WTC11 (cell line): ENCODE measurements at regions of chr16 and their contacts with region 1.

Region 1: GRCh38 chr16:88437373-88437964 is 15.6 kb upstream of the ZFPM1 start:
- DNase-seq: peak; percentile 93
- ATAC-seq: peak; percentile 84
- H3K4me3 Mint-ChIP-seq: no peak overlapping the region
- H3K27ac Mint-ChIP-seq: no peak overlapping the region
- H3K4me1 Mint-ChIP-seq: no peaks in the 10 kb centered on the region
- H3K27me3 Mint-ChIP-seq: no peaks in the 10 kb centered on the region
- CTCF ChIP-seq: peak; percentile 93

Region 2: GRCh38 chr16:88343271-88343791 is 94.1 kb before region 1 on chr16:
- CTCF ChIA-PET with region 1: no interaction called
- POLR2A ChIA-PET with region 1: no interaction called
- DNase-seq: no peak
- ATAC-seq: no peak
- H3K4me3 Mint-ChIP-seq: no peak overlapping the region
- H3K27ac Mint-ChIP-seq: no peak overlapping the region
- H3K4me1 Mint-ChIP-seq: no peaks in the 10 kb centered on the region
- H3K27me3 Mint-ChIP-seq: no peaks in the 10 kb centered on the region
- CTCF ChIP-seq: no peak

Region 3: GRCh38 chr16:88383401-88384221 is 53.9 kb before region 1 on chr16:
- CTCF ChIA-PET with region 1: interaction called, 21 read pairs
- POLR2A ChIA-PET with region 1: no interaction called
- DNase-seq: peak; percentile 51
- ATAC-seq: peak; percentile 11
- H3K4me3 Mint-ChIP-seq: peak overlapping the region; percentile 60
- H3K27ac Mint-ChIP-seq: no peak overlapping the region
- H3K4me1 Mint-ChIP-seq: peaks cover 12% of the 10 kb centered on the region
- H3K27me3 Mint-ChIP-seq: peaks cover 38% of the 10 kb centered on the region
- CTCF ChIP-seq: no peak

Region 4: DNA sequence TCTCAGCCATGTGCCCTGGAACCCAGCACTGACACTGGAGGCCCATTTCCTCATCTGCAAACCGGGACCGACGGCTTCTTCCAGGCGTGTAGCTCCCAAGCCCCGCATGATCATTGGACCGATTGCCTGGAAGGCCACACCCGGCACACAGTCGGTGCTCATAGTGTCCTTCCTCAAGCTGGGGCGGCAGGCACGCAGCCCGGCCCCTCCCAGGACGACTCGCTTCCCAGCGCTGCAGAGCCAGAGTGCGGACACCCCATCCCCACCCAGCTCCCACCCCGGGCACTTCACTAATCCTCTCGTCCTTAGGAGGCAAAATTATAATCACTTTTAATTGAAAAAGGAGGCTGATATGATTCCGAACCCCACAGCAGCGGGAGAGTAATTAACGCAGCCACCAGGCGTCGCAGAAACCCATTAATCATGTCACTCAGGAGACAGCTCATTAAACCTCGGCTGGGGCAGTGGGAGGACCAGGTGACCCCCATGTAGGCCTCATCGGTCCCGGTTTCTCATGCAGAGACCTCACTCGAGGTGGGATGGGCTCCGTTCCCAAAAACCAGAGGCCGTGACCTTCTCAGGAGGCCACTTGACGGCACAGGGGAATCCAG is 21.7 kb before region 1 on chr16:
- CTCF ChIA-PET with region 1: interaction called, 13 read pairs
- POLR2A ChIA-PET with region 1: no interaction called
- DNase-seq: no peak
- ATAC-seq: no peak
- H3K4me3 Mint-ChIP-seq: no peak overlapping the region
- H3K27ac Mint-ChIP-seq: no peak overlapping the region
- H3K4me1 Mint-ChIP-seq: no peaks in the 10 kb centered on the region
- H3K27me3 Mint-ChIP-seq: no peaks in the 10 kb centered on the region; the same call in 1 of the 2 replicates
- CTCF ChIP-seq: no peak

Region 5: GRCh38 chr16:88461331-88462269 is 24.1 kb after region 1 on chr16:
- CTCF ChIA-PET with region 1: interaction called, 12 read pairs
- POLR2A ChIA-PET with region 1: no interaction called
- DNase-seq: peak; percentile 65
- ATAC-seq: peak; percentile 90
- H3K4me3 Mint-ChIP-seq: no peak overlapping the region
- H3K27ac Mint-ChIP-seq: 0 out of 2 replicates have a peak overlapping the region, but pooled peaks have one; percentile 65
- H3K4me1 Mint-ChIP-seq: peaks cover 17% of the 10 kb centered on the region
- H3K27me3 Mint-ChIP-seq: peaks cover 16% of the 10 kb centered on the region
- CTCF ChIP-seq: no peak

Region 6: GRCh38 chr16:88533932-88534732 is 96.7 kb after region 1 on chr16:
- CTCF ChIA-PET with region 1: interaction called, 21 read pairs
- POLR2A ChIA-PET with region 1: no interaction called
- DNase-seq: peak; percentile 74
- ATAC-seq: peak; percentile 36
- H3K4me3 Mint-ChIP-seq: no peak overlapping the region
- H3K27ac Mint-ChIP-seq: no peak overlapping the region
- H3K4me1 Mint-ChIP-seq: peaks cover 12% of the 10 kb centered on the region; the same call in 1 of the 2 replicates
- H3K27me3 Mint-ChIP-seq: peaks cover 5% of the 10 kb centered on the region; the same call in 1 of the 2 replicates
- CTCF ChIP-seq: no peak

Region 7: GRCh38 chr16:88569985-88570690 is 132.7 kb after region 1 on chr16 and contains the start of gene ZC3H18:
- CTCF ChIA-PET with region 1: interaction called, 10 read pairs
- POLR2A ChIA-PET with region 1: no interaction called
- DNase-seq: peak; percentile 93
- ATAC-seq: peak; percentile 94
- H3K4me3 Mint-ChIP-seq: peak within 1 kb of the TSS; percentile 88
- H3K27ac Mint-ChIP-seq: peak within 1 kb of the TSS; percentile 55
- H3K4me1 Mint-ChIP-seq: peaks cover 15% of the 10 kb centered on the region
- H3K27me3 Mint-ChIP-seq: no peaks in the 10 kb centered on the region
- CTCF ChIP-seq: no peak
- total RNA-seq, gene ZC3H18: 57.3 to 65.6 TPM (median 61.8 TPM) in 3 replicates